Common myeloid progenitor, CD34-positive (primary cell): ENCODE measurements at regions of chr2 and their contacts with region 1.

Region 1: DNA sequence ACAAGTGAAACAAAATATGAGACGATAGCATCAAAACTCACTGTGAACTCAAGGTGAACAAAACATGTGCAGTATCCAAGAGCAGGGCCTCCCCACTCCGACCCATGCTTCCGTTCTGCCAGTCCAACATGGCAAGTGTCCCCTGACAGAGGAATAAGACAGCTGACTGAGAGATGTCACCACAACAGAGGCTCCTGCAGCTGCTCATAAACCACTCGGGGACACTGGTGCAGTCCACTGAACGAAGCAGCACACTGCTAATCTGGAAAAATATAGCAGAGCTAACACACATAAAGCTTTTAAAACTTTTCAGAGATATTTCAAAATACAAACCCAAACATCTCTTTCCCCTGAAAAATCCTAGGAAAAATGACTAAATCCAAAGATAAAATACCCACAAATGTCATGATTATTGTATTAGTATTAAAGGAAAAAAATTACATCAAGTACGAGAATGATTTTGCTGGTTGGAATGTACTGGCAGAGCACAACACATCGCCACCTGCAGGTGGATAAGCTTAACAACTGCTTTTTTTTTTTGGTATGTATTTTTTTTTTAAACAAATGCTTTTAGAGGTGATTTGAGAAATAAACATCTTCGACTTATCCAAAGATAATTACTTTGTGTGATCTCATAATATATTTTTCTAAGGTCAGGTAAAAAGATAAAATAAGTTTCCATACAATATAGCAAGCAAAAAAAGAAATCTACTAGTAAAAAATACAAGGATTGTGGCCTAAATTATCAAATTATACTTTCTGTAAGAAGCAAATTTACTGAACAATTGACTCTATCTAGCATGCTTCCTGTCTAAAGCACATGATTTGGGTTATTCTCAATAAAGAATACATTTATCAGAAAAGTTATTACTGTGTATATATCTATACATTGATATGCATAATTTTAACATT is 18.6 kb downstream of the THADA start:
- DNase-seq: peak; percentile 68 to 85 (median 85)
- H3K4me3 ChIP-seq: no peak overlapping the region
- H3K27ac ChIP-seq: no peak overlapping the region
- H3K4me1 ChIP-seq: no peaks in the 10 kb centered on the region
- H3K27me3 ChIP-seq: no peaks in the 10 kb centered on the region

Region 2: DNA sequence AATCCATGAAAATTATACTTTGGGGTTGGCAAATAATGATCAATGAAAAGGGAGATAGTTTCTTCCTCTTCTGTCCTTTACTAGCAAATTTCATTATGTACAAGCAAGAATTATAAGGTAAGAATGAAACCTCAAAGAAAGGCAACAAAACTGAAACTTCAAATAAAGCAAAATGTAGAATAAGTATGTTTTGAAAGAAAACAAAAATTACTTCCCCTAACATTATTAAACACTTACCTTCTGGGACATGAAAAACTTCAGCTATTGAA is 10.8 kb before region 1 on chr2:
- CTCF ChIA-PET with region 1: interaction called, 22 read pairs
- POLR2A ChIA-PET with region 1: no interaction called
- DNase-seq: no peak
- H3K4me3 ChIP-seq: no peak overlapping the region
- H3K27ac ChIP-seq: no peak overlapping the region
- H3K4me1 ChIP-seq: peaks cover 2 to 21% (median 9%) of the 10 kb centered on the region in 4 experiments
- H3K27me3 ChIP-seq: no peaks in the 10 kb centered on the region